ENCODE measurements at regions of chr6 and their contacts with region 1.

Region 1: DNA sequence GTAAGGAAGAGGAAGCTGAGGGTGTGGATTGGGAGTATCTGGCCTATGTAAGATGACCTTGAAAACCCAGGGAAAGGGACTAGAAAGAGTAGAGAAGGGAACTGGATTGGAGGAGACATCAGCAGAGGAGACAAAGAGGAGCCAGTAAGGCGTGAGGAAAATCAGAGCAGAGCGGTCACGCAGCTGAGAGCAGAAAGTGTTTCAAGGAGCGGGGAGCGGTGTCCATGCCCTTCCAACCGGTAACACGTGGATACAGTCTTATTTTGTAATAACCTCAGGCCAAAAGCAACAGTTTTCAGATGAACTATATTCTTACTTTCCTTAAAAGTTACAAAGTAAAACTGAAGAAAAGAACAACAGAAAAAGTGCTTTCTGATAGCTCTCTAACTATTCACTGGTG is 36.3 kb downstream of the L3MBTL3 start:
- DNase-seq: no peak
- ATAC-seq: no peak
- H3K4me3 ChIP-seq: no peak overlapping the region
- H3K4me3 Mint-ChIP-seq: no peak overlapping the region
- H3K27ac ChIP-seq: no peak overlapping the region
- H3K27ac Mint-ChIP-seq: peak overlapping the region in 6 of 9 donors; percentile 7 to 63 (median 27)
- H3K4me1 ChIP-seq: peaks cover 0 to 5% of the 10 kb centered on the region in 2 donors
- H3K4me1 Mint-ChIP-seq: peaks cover 13 to 35% (median 27%) of the 10 kb centered on the region in 7 donors
- H3K27me3 ChIP-seq: no peaks in the 10 kb centered on the region
- H3K27me3 Mint-ChIP-seq: no peaks in the 10 kb centered on the region

Region 2: DNA sequence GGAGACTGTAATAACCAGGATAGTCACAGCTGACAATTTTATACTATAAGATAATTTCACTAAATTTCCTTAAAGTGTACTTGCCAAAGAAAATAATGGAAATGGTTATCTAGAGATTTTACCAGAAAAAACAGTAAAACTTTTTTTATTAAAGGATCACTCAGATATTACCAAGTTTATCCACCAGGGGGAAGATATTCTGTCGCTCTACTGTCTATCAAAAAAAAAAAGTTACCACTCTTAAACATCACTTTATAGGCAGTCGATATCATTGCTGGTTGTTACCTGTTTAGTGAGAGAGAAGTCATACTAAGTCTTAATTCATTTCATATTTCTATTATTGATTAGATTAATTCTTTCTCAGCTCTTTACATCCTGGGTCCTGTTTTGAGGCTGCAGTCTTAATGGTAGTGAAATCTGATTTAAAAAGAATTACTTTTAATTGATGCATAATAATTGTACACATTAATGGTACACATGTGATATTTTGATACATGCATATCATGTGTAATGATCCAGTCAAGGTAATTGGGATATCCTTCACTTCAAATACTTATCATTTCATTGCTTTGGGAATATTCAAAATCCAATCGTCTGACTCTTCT is 17.4 kb before region 1 on chr6:
- CTCF ChIA-PET with region 1: no interaction called
- POLR2A ChIA-PET with region 1: no interaction called
- intact Hi-C with region 1: loop called in 1 of 2 experiments (anchors 2 kb)
- DNase-seq: peak in 4 of 9 donors; percentile 18 to 41 (median 34)
- ATAC-seq: peak; percentile 68
- H3K4me3 ChIP-seq: no peak overlapping the region
- H3K4me3 Mint-ChIP-seq: no peak overlapping the region
- H3K27ac ChIP-seq: no peak overlapping the region
- H3K27ac Mint-ChIP-seq: peak overlapping the region in 1 of 9 donors; percentile 10
- H3K4me1 ChIP-seq: peaks cover 0 to 5% of the 10 kb centered on the region in 2 donors
- H3K4me1 Mint-ChIP-seq: peaks cover 31 to 90% (median 74%) of the 10 kb centered on the region in 7 donors
- H3K27me3 ChIP-seq: no peaks in the 10 kb centered on the region
- H3K27me3 Mint-ChIP-seq: no peaks in the 10 kb centered on the region

Region 3: DNA sequence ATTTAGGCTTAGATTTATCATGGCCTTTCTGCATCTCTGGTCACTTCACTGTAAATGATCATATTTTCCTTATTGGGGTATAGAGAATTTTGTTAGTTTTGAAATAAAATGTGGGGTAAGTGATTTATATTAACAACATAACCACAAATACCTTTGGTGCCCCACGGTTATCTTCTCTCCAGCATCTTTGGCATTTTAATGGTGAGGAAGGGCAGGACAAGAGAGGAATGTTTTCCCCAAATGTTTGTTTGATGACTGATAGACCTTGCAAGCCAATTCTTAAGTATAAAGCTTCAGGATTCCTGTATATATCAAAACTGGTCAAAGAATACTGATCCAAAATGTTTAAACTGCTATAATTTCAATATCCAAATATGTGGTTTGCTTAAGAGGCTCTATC is 600.9 kb after region 1 on chr6:
- CTCF ChIA-PET with region 1: no interaction called
- POLR2A ChIA-PET with region 1: no interaction called
- intact Hi-C with region 1: no loop called
- DNase-seq: no peak
- ATAC-seq: no peak
- H3K4me3 ChIP-seq: no peak overlapping the region
- H3K4me3 Mint-ChIP-seq: no peak overlapping the region
- H3K27ac ChIP-seq: no peak overlapping the region
- H3K27ac Mint-ChIP-seq: no peak overlapping the region
- H3K4me1 ChIP-seq: no peaks in the 10 kb centered on the region
- H3K4me1 Mint-ChIP-seq: peaks cover 0 to 4% (median 0%) of the 10 kb centered on the region in 7 donors
- H3K27me3 ChIP-seq: no peaks in the 10 kb centered on the region
- H3K27me3 Mint-ChIP-seq: no peaks in the 10 kb centered on the region